CD8-positive, alpha-beta T cell (primary cell): ENCODE measurements at regions of chr2 and their contacts with region 1.

Region 1: DNA sequence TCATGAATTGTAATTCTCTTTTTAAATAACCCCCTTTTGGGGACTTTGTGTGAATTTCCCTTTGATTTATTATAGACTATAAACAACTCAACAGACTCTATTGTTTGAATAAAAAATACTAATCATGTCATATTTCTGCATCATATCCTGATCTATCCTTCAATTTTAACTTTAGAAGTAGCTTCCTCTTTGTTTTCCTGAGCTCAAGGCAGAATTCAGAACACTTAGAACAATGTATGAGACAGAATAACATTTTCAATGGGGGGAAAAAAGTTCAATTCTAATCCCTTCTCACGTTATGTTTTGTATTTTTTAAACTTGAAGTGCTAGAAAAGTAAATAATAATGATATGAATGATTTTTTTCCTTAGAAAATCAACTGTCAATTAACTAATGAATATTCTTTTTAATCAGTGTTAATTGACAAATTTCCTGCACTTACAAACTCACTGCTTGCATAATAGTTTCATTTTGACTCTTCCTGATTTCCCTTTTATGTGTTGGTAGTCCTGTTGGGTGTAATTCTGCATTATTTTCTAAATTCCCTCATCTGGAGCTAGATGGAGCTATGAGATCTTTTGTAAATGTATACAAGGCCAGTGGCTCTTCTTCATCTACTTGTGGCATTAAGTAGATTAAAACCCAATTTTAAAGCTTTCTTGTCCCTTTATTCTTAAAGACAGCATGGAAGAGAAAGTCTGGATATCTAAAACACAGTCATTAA is 326.1 kb downstream of the PARD3B start:
- DNase-seq: peak in 2 of 9 experiments; percentile 18 to 53
- ATAC-seq: no peak
- H3K4me3 ChIP-seq: no peak overlapping the region
- H3K4me3 Mint-ChIP-seq: no peak overlapping the region
- H3K27ac ChIP-seq: no peak overlapping the region
- H3K27ac Mint-ChIP-seq: no peak overlapping the region
- H3K4me1 ChIP-seq: peaks cover 17% of the 10 kb centered on the region
- H3K4me1 Mint-ChIP-seq: peaks cover 22% of the 10 kb centered on the region
- H3K27me3 ChIP-seq: no peaks in the 10 kb centered on the region
- H3K27me3 Mint-ChIP-seq: no peaks in the 10 kb centered on the region
- CTCF ChIP-seq: peak; percentile 34

Region 2: GRCh38 chr2:205133544-205133943 is 262.2 kb after region 1 on chr2:
- CTCF ChIA-PET with region 1: interaction called, 14 read pairs
- POLR2A ChIA-PET with region 1: no interaction called
- intact Hi-C with region 1: loop called (anchors 1 to 5 kb)
- DNase-seq: no peak
- ATAC-seq: no peak
- H3K4me3 ChIP-seq: no peak overlapping the region
- H3K4me3 Mint-ChIP-seq: no peak overlapping the region
- H3K27ac ChIP-seq: no peak overlapping the region
- H3K27ac Mint-ChIP-seq: no peak overlapping the region
- H3K4me1 ChIP-seq: peaks cover 21% of the 10 kb centered on the region
- H3K4me1 Mint-ChIP-seq: peaks cover 21% of the 10 kb centered on the region
- H3K27me3 ChIP-seq: no peaks in the 10 kb centered on the region
- H3K27me3 Mint-ChIP-seq: no peaks in the 10 kb centered on the region
- CTCF ChIP-seq: no peak

Region 3: GRCh38 chr2:205766779-205767359 is 895.5 kb after region 1 on chr2:
- CTCF ChIA-PET with region 1: no interaction called
- POLR2A ChIA-PET with region 1: no interaction called
- intact Hi-C with region 1: loop called in 1 of 2 experiments (anchors 10 kb)
- DNase-seq: peak; percentile 7 to 65 (median 48)
- ATAC-seq: no peak
- H3K4me3 ChIP-seq: no peak overlapping the region
- H3K4me3 Mint-ChIP-seq: no peak overlapping the region
- H3K27ac ChIP-seq: no peak overlapping the region
- H3K27ac Mint-ChIP-seq: no peak overlapping the region
- H3K4me1 ChIP-seq: no peaks in the 10 kb centered on the region
- H3K4me1 Mint-ChIP-seq: peaks cover 8% of the 10 kb centered on the region
- H3K27me3 ChIP-seq: no peaks in the 10 kb centered on the region
- H3K27me3 Mint-ChIP-seq: peaks cover 21% of the 10 kb centered on the region
- CTCF ChIP-seq: peak; percentile 84